IMR-90 (cell line): ENCODE measurements at regions of chr7 and their contacts with region 1.

Region 1: DNA sequence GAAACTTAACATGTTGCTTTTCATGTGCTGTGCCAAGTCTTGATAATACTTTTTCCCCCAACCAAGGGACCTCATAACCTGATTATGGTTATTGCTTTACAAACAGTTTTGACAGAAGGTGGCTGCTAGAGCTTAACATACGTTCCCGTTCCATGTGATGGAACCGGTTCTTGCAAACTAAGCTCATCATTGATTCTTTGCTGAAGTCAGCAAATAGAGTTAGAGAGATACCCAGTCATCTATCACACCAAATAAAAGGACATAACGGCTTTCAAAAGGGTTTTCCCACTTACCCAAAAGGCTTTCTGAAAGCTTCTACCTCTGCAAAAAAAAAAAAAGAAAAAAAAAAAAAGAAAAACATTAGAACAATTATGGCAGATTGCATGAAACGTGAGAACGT is 230.3 kb upstream of the MDFIC start:
- DNase-seq: no peak
- ATAC-seq: no peak
- H3K4me3 ChIP-seq: no peak overlapping the region
- H3K27ac ChIP-seq: no peak overlapping the region
- H3K4me1 ChIP-seq: no peaks in the 10 kb centered on the region
- H3K27me3 ChIP-seq: no peaks in the 10 kb centered on the region
- CTCF ChIP-seq: no peak
- POLR2A ChIP-seq: no peak
- RAD21 ChIP-seq: no peak

Region 2: GRCh38 chr7:114777288-114777687 is 85.7 kb after region 1 on chr7:
- CTCF ChIA-PET with region 1: no interaction called
- POLR2A ChIA-PET with region 1: no interaction called
- dilution Hi-C with region 1: no loop called
- in situ Hi-C with region 1: no loop called
- intact Hi-C with region 1: no loop called
- DNase-seq: no peak
- ATAC-seq: no peak
- H3K4me3 ChIP-seq: no peak overlapping the region
- H3K27ac ChIP-seq: no peak overlapping the region
- H3K4me1 ChIP-seq: no peaks in the 10 kb centered on the region
- H3K27me3 ChIP-seq: no peaks in the 10 kb centered on the region
- CTCF ChIP-seq: no peak
- POLR2A ChIP-seq: no peak
- RAD21 ChIP-seq: no peak

Region 3: DNA sequence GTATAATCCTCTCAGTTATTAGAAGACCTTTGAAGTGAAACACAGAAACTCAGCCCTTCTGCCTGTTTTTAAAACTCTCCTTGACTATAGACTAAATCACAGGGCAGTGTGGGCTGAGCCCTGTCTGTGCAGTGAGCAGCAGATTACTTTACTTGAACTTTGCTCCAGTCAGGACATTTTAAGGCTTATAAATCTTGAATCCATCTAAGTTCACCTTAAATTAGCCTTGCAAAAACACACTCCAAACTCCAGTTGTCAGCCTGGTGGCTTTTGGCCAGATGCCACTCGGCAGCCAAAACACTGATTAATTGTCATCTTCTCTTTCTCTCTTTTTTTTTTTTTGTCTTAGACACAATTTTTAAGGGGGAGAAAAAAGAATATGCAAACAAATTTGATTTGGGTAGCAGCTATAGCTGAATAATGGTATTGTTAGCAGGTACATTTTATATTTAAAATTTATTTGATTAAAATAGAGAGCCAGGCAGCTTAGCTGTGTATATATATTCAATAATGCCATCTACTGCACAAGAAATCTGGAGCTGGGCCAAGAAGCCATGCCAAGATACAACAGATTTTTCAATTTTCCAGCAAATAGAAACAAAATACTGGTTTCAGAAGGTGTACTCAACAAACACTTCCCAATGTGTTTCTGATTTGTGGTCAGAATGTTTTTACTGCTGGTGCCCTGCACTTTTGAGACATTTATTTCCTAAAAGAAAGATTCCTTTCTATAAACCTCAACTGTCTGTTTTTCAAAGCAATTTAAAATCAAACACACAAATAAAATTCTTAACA is 1091.3 kb after region 1 on chr7:
- CTCF ChIA-PET with region 1: no interaction called
- POLR2A ChIA-PET with region 1: interaction called, 30 read pairs
- dilution Hi-C with region 1: no loop called
- in situ Hi-C with region 1: no loop called
- intact Hi-C with region 1: no loop called
- DNase-seq: no peak
- ATAC-seq: no peak
- H3K4me3 ChIP-seq: no peak overlapping the region
- H3K27ac ChIP-seq: no peak overlapping the region
- H3K4me1 ChIP-seq: no peaks in the 10 kb centered on the region
- H3K27me3 ChIP-seq: no peaks in the 10 kb centered on the region
- CTCF ChIP-seq: no peak
- POLR2A ChIP-seq: no peak
- RAD21 ChIP-seq: no peak